Activated B cell treated with CpG ODN at 0.5 μM for 24 hours (primary cell): ENCODE measurements at regions of chr6 and their contacts with region 1.

Region 1: GRCh38 chr6:139375232-139376016 is 976 bp upstream of the CITED2 start:
- DNase-seq: peak; percentile 81
- ATAC-seq: peak; percentile 51
- H3K4me3 Mint-ChIP-seq: peak overlapping the region; percentile 99
- H3K27ac Mint-ChIP-seq: peak overlapping the region; percentile 95
- H3K4me1 Mint-ChIP-seq: peaks cover 27% of the 10 kb centered on the region
- H3K27me3 Mint-ChIP-seq: no peaks in the 10 kb centered on the region
- CTCF ChIP-seq: no peak

Region 2: GRCh38 chr6:137926207-137926731 is 1449.2 kb before region 1 on chr6:
- CTCF ChIA-PET with region 1: no interaction called
- POLR2A ChIA-PET with region 1: no interaction called
- intact Hi-C with region 1: no loop called
- DNase-seq: no peak
- ATAC-seq: no peak
- H3K4me3 Mint-ChIP-seq: no peak overlapping the region
- H3K27ac Mint-ChIP-seq: no peak overlapping the region
- H3K4me1 Mint-ChIP-seq: peaks cover 57% of the 10 kb centered on the region
- H3K27me3 Mint-ChIP-seq: no peaks in the 10 kb centered on the region
- CTCF ChIP-seq: no peak

Region 3: DNA sequence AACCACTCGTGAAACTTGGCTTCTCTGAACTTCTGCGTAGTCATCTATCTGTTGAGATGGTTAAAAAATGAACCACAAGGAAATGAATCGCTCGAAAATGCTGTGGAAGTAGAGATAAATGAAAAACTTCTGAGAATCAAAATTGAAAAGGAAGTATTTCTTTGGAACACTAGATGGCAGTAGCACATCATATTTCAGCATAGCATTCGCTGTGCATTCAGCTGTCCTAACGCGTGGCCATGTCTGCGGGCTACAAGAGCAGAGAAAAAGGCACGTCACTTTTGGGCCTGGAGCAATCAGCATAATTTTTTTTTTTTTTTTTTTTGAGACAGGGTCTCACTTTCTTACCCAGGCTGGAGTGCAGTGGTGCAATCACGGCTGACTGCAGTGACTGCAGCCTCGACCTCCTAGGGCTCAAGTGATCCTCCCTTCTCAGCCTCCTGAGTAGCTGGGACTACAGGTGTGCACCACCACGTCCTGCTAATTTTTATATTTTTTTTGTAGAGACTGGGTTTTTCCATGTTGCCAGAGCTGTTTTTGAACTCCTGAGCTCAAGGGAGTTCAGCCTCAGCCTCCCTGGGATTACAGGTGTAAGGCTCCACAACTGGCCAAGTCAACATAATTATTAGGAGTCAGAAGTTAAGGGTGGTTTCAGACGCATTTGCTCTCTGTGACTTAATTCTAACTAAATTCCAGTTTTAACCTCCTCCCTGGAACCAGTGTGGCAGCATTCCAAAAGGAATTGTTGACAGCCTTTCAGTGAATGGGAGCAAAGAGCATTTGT is 1259.4 kb before region 1 on chr6:
- CTCF ChIA-PET with region 1: no interaction called
- POLR2A ChIA-PET with region 1: no interaction called
- intact Hi-C with region 1: loop called (anchors 10 kb)
- DNase-seq: no peak
- ATAC-seq: peak; percentile 85
- H3K4me3 Mint-ChIP-seq: no peak overlapping the region
- H3K27ac Mint-ChIP-seq: no peak overlapping the region
- H3K4me1 Mint-ChIP-seq: peaks cover 6% of the 10 kb centered on the region
- H3K27me3 Mint-ChIP-seq: peaks cover 26% of the 10 kb centered on the region
- CTCF ChIP-seq: peak; percentile 61

Region 4: GRCh38 chr6:138987640-138988468 is 387.6 kb before region 1 on chr6 and contains the start of gene REPS1:
- CTCF ChIA-PET with region 1: interaction called, 3 read pairs
- POLR2A ChIA-PET with region 1: interaction called, 4 read pairs
- intact Hi-C with region 1: loop called (anchors 2 kb)
- DNase-seq: peak; percentile 94
- ATAC-seq: peak; percentile 94
- H3K4me3 Mint-ChIP-seq: peak within 1 kb of the TSS; percentile 92
- H3K27ac Mint-ChIP-seq: peak within 1 kb of the TSS; percentile 91
- H3K4me1 Mint-ChIP-seq: peaks cover 7% of the 10 kb centered on the region
- H3K27me3 Mint-ChIP-seq: no peaks in the 10 kb centered on the region
- CTCF ChIP-seq: peak; percentile 91
- total RNA-seq, gene REPS1: 44.8 and 58.8 TPM in 2 replicates

Region 5: DNA sequence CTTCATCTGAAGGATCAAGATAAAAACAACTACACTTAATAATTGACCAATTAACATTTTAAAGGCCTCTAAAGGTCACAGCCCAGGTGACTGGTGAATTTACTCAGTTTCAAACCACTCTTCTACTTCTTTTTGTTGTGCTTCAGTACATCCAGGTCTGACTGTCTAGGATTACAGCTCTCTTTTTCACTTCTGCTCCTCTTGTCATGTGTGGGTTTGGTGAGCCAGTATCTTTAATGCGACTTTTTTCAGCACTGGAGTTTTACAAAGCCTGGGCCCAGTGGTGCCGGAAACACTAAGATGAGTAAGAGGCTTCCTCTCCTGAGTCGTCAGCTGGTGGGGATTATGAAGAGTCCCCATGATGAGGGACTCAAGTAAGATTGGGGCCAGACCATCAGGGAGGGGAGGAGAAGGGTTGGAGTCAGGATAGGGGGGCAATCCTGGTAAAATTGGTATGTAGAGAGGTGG is 213.6 kb before region 1 on chr6:
- CTCF ChIA-PET with region 1: interaction called, 5 read pairs
- POLR2A ChIA-PET with region 1: interaction called, 15 read pairs
- intact Hi-C with region 1: no loop called
- DNase-seq: peak; percentile 36
- ATAC-seq: peak; percentile 95
- H3K4me3 Mint-ChIP-seq: peak overlapping the region; percentile 66
- H3K27ac Mint-ChIP-seq: peak overlapping the region; percentile 94
- H3K4me1 Mint-ChIP-seq: peaks cover 77% of the 10 kb centered on the region
- H3K27me3 Mint-ChIP-seq: no peaks in the 10 kb centered on the region
- CTCF ChIP-seq: no peak

Region 6: GRCh38 chr6:139323511-139324300 is 51.7 kb before region 1 on chr6:
- CTCF ChIA-PET with region 1: no interaction called
- POLR2A ChIA-PET with region 1: interaction called, 10 read pairs
- intact Hi-C with region 1: loop called (anchors 1 kb)
- DNase-seq: peak; percentile 56
- ATAC-seq: peak; percentile 62
- H3K4me3 Mint-ChIP-seq: peak overlapping the region; percentile 85
- H3K27ac Mint-ChIP-seq: peak overlapping the region; percentile 89
- H3K4me1 Mint-ChIP-seq: peaks cover 45% of the 10 kb centered on the region
- H3K27me3 Mint-ChIP-seq: no peaks in the 10 kb centered on the region
- CTCF ChIP-seq: no peak

Region 7: DNA sequence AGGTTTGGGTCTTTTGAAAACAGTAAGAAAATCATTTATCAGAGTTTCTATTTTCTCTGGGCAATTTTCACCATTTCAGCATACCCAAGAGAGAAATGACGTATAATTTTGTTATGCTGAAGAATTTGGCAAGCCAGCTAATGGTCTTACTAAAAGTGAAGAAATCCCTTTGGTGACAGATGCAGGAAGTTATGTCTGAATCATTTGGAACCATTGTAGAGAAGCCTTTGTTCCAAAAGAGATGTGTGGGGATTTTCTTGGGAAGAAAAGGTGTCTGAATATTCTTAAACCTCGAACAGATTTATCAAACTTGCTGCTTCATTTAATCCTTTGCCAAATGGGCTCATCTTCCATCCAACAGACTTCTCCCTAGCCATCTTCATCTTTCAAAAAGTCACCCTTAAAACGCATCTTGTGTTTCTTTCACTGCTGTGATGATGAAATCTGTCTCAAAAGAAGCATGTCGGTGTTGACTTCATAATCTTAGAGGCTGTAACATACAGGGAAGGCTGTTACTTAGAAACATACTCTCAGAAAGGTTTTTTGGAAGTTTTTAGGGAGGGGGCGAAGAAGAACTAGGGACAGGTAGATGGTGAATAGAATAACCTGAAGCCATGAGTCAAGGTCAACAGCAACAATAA is 40.5 kb before region 1 on chr6:
- CTCF ChIA-PET with region 1: no interaction called
- POLR2A ChIA-PET with region 1: no interaction called
- intact Hi-C with region 1: no loop called
- DNase-seq: no peak
- ATAC-seq: no peak
- H3K4me3 Mint-ChIP-seq: no peak overlapping the region
- H3K27ac Mint-ChIP-seq: no peak overlapping the region
- H3K4me1 Mint-ChIP-seq: peaks cover 9% of the 10 kb centered on the region
- H3K27me3 Mint-ChIP-seq: no peaks in the 10 kb centered on the region
- CTCF ChIP-seq: no peak

Region 8: DNA sequence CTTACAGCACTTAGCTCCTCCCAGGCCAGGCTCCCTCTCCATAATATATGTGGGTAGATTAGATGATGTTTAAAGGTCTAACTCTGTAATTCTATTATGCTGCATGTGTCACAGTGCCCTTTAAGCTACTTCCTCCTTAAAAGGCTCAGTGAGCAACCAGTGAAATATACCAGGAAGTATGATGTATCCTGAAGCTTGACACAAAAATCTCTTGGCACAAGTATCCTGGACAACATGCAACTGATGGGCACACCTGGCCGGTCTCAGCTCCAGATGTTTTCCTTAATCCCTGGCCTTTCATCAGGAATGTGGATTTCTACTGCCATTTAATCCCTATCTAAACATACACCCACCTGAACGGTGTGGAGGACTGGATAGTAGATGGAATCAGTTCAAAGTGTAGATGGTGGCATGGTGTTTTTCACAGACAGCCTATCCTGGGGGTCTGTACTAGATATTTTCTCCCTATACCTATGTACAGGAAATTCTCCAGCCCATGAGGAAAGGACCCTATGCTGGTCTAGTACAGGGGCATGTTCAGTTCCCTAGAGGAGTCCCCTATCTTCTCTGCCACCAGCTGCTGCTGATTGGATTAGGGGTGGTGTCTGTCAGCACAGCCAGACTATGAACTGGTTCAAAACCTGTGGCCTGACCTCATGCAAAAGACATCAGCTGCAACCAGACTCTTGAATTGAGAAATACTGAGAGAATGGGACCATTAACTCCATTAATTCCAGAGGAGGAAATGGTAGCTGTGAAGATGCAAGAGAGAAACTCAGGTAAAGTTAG is 58.4 kb after region 1 on chr6:
- CTCF ChIA-PET with region 1: no interaction called
- POLR2A ChIA-PET with region 1: interaction called, 4 read pairs
- intact Hi-C with region 1: loop called (anchors 5 kb)
- DNase-seq: no peak
- ATAC-seq: no peak
- H3K4me3 Mint-ChIP-seq: no peak overlapping the region
- H3K27ac Mint-ChIP-seq: no peak overlapping the region
- H3K4me1 Mint-ChIP-seq: peaks cover 5% of the 10 kb centered on the region
- H3K27me3 Mint-ChIP-seq: no peaks in the 10 kb centered on the region
- CTCF ChIP-seq: no peak

Region 9: DNA sequence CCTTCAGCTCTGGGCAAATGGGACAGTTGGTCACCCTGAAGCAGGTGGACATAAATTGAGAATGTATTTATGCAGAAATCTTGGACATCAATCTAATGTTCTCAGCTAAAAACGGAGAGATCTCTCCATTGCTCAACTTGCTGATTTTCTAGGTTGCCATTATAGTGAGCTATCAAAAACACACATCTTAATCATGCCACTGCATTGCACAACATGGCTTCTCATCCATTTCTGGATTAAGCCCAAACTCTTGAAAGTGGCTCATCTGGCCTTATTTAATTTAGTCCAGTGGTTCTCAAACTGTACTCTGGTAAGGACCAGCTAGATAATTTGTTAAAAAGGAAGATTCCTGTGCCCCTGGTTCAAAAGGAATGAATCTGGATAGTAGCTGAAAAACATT is 323.9 kb after region 1 on chr6:
- CTCF ChIA-PET with region 1: no interaction called
- POLR2A ChIA-PET with region 1: no interaction called
- intact Hi-C with region 1: no loop called
- DNase-seq: no peak
- ATAC-seq: no peak
- H3K4me3 Mint-ChIP-seq: no peak overlapping the region
- H3K27ac Mint-ChIP-seq: no peak overlapping the region
- H3K4me1 Mint-ChIP-seq: peaks cover 2% of the 10 kb centered on the region
- H3K27me3 Mint-ChIP-seq: peaks cover 2% of the 10 kb centered on the region
- CTCF ChIP-seq: no peak

Region 10: DNA sequence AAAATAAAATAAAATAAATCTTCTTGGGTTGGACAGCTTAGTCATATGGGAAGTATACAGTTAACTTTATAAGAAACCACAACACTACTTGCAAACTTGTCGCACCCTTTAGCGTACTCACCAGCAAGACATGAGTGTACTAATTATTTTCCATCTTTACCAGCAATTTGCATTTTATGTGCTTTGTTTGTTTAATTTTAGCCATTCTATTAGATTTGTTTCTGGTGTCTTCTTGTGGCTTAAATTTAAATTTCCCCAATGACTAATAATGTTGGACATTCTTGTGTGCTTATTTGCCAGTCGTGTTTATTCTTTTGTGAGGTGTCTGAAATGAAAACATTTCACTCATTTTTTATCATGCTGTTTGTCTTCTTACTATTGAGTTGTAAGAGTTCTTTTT is 1171.2 kb after region 1 on chr6:
- CTCF ChIA-PET with region 1: no interaction called
- POLR2A ChIA-PET with region 1: no interaction called
- intact Hi-C with region 1: no loop called
- DNase-seq: no peak
- ATAC-seq: no peak
- H3K4me3 Mint-ChIP-seq: no peak overlapping the region
- H3K27ac Mint-ChIP-seq: no peak overlapping the region
- H3K4me1 Mint-ChIP-seq: no peaks in the 10 kb centered on the region
- H3K27me3 Mint-ChIP-seq: no peaks in the 10 kb centered on the region
- CTCF ChIP-seq: no peak